ENCODE measurements at regions of chr11 and their contacts with region 1.

Region 1: DNA sequence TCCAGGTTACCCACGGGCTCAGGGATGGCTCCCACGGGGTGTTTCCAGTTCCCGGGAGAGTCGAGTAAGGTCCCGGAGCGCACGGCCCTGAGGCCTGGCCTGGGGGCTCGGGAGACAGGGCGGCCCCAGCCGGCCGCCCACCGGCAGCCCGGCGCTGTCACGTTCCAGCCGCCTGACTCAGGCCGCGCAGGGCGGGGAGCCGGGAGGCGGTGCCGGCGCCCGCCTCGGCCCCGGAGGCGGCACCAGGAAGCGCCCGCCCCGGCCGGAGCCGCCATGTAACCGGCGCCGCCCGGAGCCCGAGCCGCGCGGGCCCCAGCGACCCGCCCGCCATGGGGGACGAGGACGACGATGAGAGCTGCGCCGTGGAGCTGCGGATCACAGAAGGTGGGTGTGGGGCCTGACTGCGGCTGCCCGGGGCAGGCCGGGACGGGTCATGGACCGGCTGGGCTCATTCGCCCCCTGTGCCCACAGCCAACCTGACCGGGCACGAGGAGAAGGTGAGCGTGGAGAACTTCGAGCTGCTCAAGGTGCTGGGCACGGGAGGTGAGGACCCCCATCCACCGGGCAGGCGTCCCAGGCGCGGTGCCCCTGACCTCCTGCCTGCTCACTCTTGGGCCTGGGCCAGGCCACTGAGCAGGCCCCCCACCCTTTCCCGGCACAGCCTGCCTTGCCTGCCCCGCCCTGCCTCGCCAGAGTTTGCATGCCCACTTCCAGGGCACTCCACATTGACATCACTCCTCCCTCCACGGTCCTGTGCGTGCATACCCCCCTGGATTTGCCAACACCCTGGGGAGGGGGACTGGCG is at the start of gene RPS6KA4:
- DNase-seq: peak in 6 of 10 donors; percentile 15 to 82 (median 64)
- H3K4me3 ChIP-seq: peak within 1 kb of the TSS; percentile 58 to 98 (median 90)
- H3K27ac ChIP-seq: peak within 1 kb of the TSS; percentile 33 to 98 (median 91)
- H3K27me3 ChIP-seq: no peaks in the 10 kb centered on the region
- CTCF ChIP-seq: peak in 11 of 56 donors; percentile 10 to 29 (median 17)
- total RNA-seq, gene RPS6KA4: 22.6 to 49.3 (median 33.0) TPM

Region 2: GRCh38 chr11:64317957-64318693 is 41.0 kb before region 1 on chr11 and contains the start of gene PRDX5:
- intact Hi-C with region 1: loop called (anchors 2 to 5 kb)
- DNase-seq: peak; percentile 93 to 99 (median 97)
- H3K4me3 ChIP-seq: peak within 1 kb of the TSS; percentile 68 to 99 (median 93)
- H3K27ac ChIP-seq: peak within 1 kb of the TSS; percentile 93 to 100 (median 100)
- H3K27me3 ChIP-seq: no peaks in the 10 kb centered on the region
- CTCF ChIP-seq: peak; percentile 11 to 83 (median 69)
- total RNA-seq, gene PRDX5: 101 to 340 (median 208) TPM

Region 3: GRCh38 chr11:64583296-64584232 is 224.5 kb after region 1 on chr11:
- intact Hi-C with region 1: no loop called
- DNase-seq: peak in 4 of 10 donors; percentile 21 to 78 (median 28)
- H3K4me3 ChIP-seq: no peak overlapping the region
- H3K27ac ChIP-seq: peak overlapping the region in 1 of 59 donors; percentile 71
- H3K27me3 ChIP-seq: no peaks in the 10 kb centered on the region
- CTCF ChIP-seq: no peak

Region 4: GRCh38 chr11:64638018-64638665 is 279.0 kb after region 1 on chr11:
- intact Hi-C with region 1: loop called in 1 of 2 experiments (anchors 10 kb)
- DNase-seq: peak in 2 of 10 donors; percentile 46 to 49
- H3K4me3 ChIP-seq: peak overlapping the region in 58 of 59 donors; percentile 11 to 79 (median 64)
- H3K27ac ChIP-seq: peak overlapping the region in 45 of 59 donors; percentile 7 to 85 (median 58)
- H3K27me3 ChIP-seq: peaks cover 0 to 3% (median 0%) of the 10 kb centered on the region in 45 donors
- CTCF ChIP-seq: no peak

Measured in dorsolateral prefrontal cortex (tissue), 120 donors.